Dendritic cell treated with granulocyte-macrophage colony-stimulating factor and Interleukin-4, amounts not matched to agents 40 ng/mL and 50 ng/mL, for 4 days (primary cell): ENCODE measurements at regions of chr12 and their contacts with region 1.

Region 1: DNA sequence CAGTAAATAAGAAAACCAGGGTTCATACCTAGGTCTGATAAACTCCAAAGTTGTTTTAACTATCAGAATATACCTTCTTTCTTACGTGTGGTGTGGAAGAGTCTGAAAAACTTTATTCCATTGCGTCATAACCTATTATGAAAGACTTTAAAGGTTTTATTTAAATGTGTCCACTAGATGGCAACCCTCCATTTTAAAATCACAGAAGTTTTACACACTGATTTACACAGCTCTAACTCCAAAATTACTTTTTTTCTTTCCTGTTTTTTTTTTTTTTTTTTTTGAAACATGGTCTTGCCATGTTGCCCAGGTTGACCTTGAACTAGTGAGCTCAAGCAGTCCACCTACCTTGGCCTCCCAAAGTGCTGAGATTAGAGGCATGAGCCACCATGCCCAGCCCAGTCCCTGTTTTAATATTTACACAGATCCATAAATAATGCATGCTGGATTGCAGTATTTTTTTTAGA is 17.3 kb upstream of the TMPRSS12 start:
- H3K4me3 Mint-ChIP-seq: no peak overlapping the region
- H3K27ac Mint-ChIP-seq: no peak overlapping the region
- H3K4me1 Mint-ChIP-seq: peaks cover 14% of the 10 kb centered on the region
- H3K27me3 Mint-ChIP-seq: no peaks in the 10 kb centered on the region

Region 2: DNA sequence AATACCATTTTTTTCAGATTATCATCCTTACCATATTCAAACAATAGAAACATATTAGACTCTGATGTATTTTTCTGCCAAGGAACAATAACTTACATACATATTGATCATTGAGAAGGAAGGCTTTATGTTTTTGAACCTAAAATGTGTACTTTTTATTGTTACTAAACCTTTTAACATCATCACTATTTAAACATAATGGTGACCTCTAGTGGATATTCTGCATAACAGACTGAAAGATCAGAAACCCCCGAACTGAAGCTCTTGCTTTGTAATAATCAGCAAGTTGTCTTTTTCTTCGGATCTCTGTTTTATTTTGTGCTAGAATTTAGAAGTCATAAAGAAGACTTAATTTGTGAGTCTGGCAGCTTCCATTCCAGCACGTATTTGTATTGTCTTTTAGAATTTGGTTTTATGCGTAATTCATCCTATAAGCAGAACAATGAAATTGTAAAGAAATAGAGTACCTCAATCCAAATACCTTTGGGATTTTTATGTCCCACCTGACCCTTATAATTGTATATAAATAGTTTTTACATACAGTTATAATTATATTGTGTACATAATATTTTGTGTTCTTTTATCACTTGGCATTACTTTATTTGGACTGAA is 187.4 kb before region 1 on chr12:
- intact Hi-C with region 1: no loop called
- H3K4me3 Mint-ChIP-seq: no peak overlapping the region
- H3K27ac Mint-ChIP-seq: no peak overlapping the region
- H3K4me1 Mint-ChIP-seq: peaks cover 72% of the 10 kb centered on the region
- H3K27me3 Mint-ChIP-seq: no peaks in the 10 kb centered on the region

Region 3: GRCh38 chr12:50986966-50987737 is 161.7 kb after region 1 on chr12:
- intact Hi-C with region 1: loop called (anchors 1 kb)
- H3K4me3 Mint-ChIP-seq: no peak overlapping the region
- H3K27ac Mint-ChIP-seq: no peak overlapping the region
- H3K4me1 Mint-ChIP-seq: peaks cover 25% of the 10 kb centered on the region
- H3K27me3 Mint-ChIP-seq: no peaks in the 10 kb centered on the region